ENCODE measurements at regions of chr4 and their contacts with region 1.

Region 1: GRCh38 chr4:38119668-38120385 is 159.6 kb downstream of the PTTG2 start:
- DNase-seq: peak; percentile 73 to 89
- H3K4me3 ChIP-seq: peak overlapping the region; percentile 16; the same call in 1 of the 2 replicates
- H3K27ac ChIP-seq: peak overlapping the region; percentile 62
- H3K4me1 ChIP-seq: peaks cover 32% of the 10 kb centered on the region
- H3K27me3 ChIP-seq: no peaks in the 10 kb centered on the region
- CTCF ChIP-seq: no peak

Region 2: GRCh38 chr4:38078590-38079421 is 41.0 kb before region 1 on chr4:
- CTCF ChIA-PET with region 1: no interaction called
- POLR2A ChIA-PET with region 1: no interaction called
- intact Hi-C with region 1: loop called (anchors 5 kb)
- DNase-seq: peak in 1 of 2 experiments; percentile 89
- H3K4me3 ChIP-seq: no peak overlapping the region
- H3K27ac ChIP-seq: peak overlapping the region; percentile 80
- H3K4me1 ChIP-seq: peaks cover 81% of the 10 kb centered on the region
- H3K27me3 ChIP-seq: no peaks in the 10 kb centered on the region
- CTCF ChIP-seq: no peak

Region 3: DNA sequence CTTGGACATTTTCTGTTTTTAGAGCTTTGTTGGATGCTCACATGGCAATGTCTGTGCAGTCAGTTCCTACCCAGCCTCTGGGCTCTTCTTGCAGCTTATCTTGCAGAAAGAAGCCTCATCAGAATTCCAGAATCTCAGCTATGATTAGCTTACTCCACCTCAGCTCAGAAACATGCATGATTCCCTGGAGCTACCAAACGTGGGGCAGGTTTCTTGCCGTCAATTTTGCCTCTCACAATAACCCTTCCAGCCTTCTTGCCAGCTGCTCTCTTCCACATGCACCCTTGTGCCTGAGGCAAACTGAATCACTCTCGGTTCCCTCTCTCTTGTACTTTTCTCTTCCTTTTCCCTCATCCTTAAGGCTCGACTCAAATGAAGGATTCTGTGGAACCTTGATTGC is 18.3 kb before region 1 on chr4:
- CTCF ChIA-PET with region 1: no interaction called
- POLR2A ChIA-PET with region 1: interaction called, 18 read pairs
- intact Hi-C with region 1: no loop called
- DNase-seq: no peak
- H3K4me3 ChIP-seq: no peak overlapping the region
- H3K27ac ChIP-seq: no peak overlapping the region
- H3K4me1 ChIP-seq: no peaks in the 10 kb centered on the region
- H3K27me3 ChIP-seq: no peaks in the 10 kb centered on the region
- CTCF ChIP-seq: no peak